ENCODE measurements at regions of chr4 and their contacts with region 1.

Region 1: DNA sequence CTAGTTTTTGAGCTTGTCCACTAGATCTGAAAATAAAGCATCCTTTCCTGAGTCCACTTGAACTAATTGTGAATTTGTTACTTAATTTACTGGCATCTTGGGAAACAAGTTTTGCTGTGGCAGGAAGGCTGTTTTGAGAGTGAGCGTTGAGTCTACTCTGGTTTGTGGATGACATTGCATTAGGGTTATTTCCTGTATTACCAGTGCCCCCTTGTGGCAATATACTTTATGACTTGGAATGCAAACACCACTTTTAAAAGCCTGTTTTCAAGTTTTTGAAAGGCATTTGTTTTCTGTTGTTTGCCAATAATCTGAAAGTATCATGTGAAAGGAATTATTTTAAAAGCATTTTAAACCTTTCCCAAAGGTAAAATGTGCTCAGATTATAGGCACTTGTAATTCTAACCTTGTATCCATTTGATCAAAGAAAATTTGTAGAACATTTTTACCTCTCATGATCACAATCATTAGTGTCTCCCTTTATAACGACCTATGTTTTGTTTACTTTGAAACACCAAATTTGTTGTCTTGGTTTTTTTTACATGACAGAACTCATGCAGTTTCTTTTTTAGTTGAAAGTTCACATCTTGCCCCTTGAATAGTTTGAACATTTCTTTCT is 18.0 kb upstream of the CYP2U1 start:
- DNase-seq: peak; percentile 62
- ATAC-seq: peak; percentile 75
- H3K4me3 Mint-ChIP-seq: no peak overlapping the region
- H3K27ac Mint-ChIP-seq: no peak overlapping the region
- H3K4me1 Mint-ChIP-seq: no peaks in the 10 kb centered on the region
- H3K27me3 Mint-ChIP-seq: peaks cover 8% of the 10 kb centered on the region

Region 2: DNA sequence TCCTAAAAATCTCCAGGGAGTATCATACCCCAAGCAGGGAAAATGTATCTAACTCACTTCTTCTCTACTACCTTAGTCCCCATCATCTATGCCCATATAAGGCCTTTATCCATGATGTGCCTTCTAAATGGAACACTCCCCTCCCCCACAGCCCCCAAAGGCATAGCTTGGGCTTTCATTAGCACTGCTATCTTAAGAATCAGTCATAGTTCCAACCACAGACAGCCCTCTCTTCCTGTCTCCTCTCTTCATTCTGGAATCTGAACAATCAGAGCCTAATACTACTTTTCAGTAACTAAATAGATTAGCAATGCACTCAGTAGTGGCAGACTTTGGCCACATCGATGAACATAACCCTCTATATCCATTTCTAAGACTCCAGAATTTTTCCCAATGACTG is 564.1 kb before region 1 on chr4:
- CTCF ChIA-PET with region 1: no interaction called
- POLR2A ChIA-PET with region 1: no interaction called
- DNase-seq: no peak
- ATAC-seq: no peak
- H3K4me3 Mint-ChIP-seq: no peak overlapping the region
- H3K27ac Mint-ChIP-seq: no peak overlapping the region
- H3K4me1 Mint-ChIP-seq: no peaks in the 10 kb centered on the region
- H3K27me3 Mint-ChIP-seq: peaks cover 3% of the 10 kb centered on the region

Region 3: GRCh38 chr4:107757864-107758476 is 155.4 kb before region 1 on chr4:
- CTCF ChIA-PET with region 1: interaction called, 11 read pairs
- POLR2A ChIA-PET with region 1: no interaction called
- DNase-seq: no peak
- ATAC-seq: no peak
- H3K4me3 Mint-ChIP-seq: no peak overlapping the region
- H3K27ac Mint-ChIP-seq: no peak overlapping the region
- H3K4me1 Mint-ChIP-seq: no peaks in the 10 kb centered on the region
- H3K27me3 Mint-ChIP-seq: peaks cover 11% of the 10 kb centered on the region

Region 4: DNA sequence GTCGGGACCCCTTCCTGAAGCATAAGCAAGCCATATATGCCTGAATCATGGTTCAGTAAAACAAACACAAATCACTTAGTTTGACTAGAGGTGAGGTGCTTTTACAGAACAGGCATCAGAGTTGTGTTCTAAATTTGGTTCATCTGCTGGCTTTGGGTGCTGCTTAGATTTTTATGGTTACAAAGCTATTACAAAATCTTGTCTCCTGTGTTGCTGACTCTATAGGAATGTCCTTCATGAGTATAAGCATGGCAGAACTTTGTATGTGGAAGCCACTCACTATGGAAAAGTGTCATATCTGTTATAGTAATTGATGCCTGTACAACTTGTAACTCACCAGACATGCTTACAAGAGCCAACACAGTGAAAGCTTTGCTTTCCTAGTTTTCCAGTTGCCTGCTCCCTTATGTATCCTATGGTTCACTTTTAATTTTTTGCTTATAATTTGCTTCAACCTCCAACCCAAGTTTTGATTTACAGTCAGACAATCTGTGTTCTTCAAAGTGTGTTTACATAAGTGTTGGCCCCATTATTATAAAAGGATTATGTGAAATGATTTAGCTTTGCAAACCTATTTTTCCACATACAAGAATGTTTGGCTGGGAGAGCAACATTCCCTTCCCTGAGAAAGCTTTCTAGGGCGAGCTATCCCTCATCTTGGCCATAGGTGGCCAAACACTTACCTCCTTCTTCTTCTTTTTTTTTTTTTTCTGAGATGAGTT is 12.0 kb before region 1 on chr4:
- CTCF ChIA-PET with region 1: interaction called, 10 read pairs
- POLR2A ChIA-PET with region 1: no interaction called
- DNase-seq: no peak
- ATAC-seq: no peak
- H3K4me3 Mint-ChIP-seq: no peak overlapping the region
- H3K27ac Mint-ChIP-seq: no peak overlapping the region
- H3K4me1 Mint-ChIP-seq: no peaks in the 10 kb centered on the region
- H3K27me3 Mint-ChIP-seq: peaks cover 19% of the 10 kb centered on the region

Region 5: GRCh38 chr4:107978716-107979451 is 65.5 kb after region 1 on chr4:
- CTCF ChIA-PET with region 1: no interaction called
- POLR2A ChIA-PET with region 1: no interaction called
- DNase-seq: no peak
- ATAC-seq: no peak
- H3K4me3 Mint-ChIP-seq: no peak overlapping the region
- H3K27ac Mint-ChIP-seq: no peak overlapping the region
- H3K4me1 Mint-ChIP-seq: peaks cover 8% of the 10 kb centered on the region
- H3K27me3 Mint-ChIP-seq: no peaks in the 10 kb centered on the region

Measured in activated CD8-positive, alpha-beta T cell treated with anti-CD3 and anti-CD28 coated beads, Interleukin-2, amount 10 ng/mL, durations not matched to agents 7 days and 5 days (primary cell).